ENCODE measurements at regions of chr16 and their contacts with region 1.

Region 1: GRCh38 chr16:1308977-1309885 is at the start of gene UBE2I:
- DNase-seq: peak; percentile 98
- ATAC-seq: peak; percentile 67
- H3K4me3 Mint-ChIP-seq: peak within 1 kb of the TSS; percentile 97
- H3K27ac Mint-ChIP-seq: peak within 1 kb of the TSS; percentile 99
- H3K4me1 Mint-ChIP-seq: peaks cover 47% of the 10 kb centered on the region
- H3K27me3 Mint-ChIP-seq: no peaks in the 10 kb centered on the region
- total RNA-seq, gene UBE2I: 251 to 358 TPM

Region 2: DNA sequence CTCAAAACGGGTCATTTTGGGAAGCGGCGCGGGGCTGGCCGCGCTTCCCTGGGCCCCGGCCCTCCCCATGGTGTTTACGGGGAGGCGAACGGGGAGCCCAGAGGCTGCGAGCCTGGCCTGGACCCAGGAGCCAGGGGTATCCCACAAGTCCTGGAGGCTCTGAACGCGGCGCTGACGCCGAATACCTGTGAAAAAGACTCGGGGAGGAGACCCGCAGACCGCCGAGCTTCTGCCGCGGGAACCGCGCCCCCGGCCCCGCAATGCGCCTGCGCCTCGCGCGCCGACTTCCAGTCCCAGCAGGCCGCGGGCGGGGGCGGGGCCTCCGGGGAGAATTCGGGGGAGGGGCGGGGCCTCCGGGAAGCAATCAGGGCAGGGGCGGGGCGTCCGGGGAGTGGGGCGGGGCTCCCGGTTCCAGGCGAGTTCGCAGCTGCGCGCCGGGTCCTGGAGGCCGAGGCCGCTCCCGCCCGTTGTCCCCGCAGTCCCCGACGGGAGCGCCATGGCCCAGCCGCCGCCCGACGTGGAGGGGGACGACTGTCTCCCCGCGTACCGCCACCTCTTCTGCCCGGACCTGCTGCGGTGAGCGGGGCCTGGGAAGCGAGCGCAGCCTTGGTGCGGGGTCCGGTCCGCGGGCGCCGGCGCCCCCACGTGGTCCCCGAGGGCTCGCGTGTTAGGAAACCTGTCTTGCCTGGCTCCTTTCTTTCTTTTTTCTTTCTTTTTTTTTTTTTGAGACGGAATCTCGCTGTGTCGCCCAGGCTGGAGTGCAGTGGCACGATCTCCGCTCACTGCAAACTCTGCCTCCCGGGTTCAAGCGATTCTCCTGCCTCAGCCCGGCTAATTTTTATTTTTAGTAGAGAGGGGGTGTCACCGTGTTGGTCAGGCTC is 907.5 kb before region 1 on chr16 and contains the start of gene DECR2:
- CTCF ChIA-PET with region 1: no interaction called
- POLR2A ChIA-PET with region 1: no interaction called
- intact Hi-C with region 1: loop called in 1 of 2 experiments (anchors 5 kb)
- DNase-seq: peak; percentile 100
- ATAC-seq: peak; percentile 87
- H3K4me3 Mint-ChIP-seq: peak within 1 kb of the TSS; percentile 82
- H3K27ac Mint-ChIP-seq: peak within 1 kb of the TSS; percentile 87
- H3K4me1 Mint-ChIP-seq: peaks cover 10% of the 10 kb centered on the region
- H3K27me3 Mint-ChIP-seq: no peaks in the 10 kb centered on the region
- total RNA-seq, gene DECR2: 11.5 to 13.0 TPM

Region 3: GRCh38 chr16:684067-684794 is 625.0 kb before region 1 on chr16 and contains the start of gene JMJD8:
- CTCF ChIA-PET with region 1: no interaction called
- POLR2A ChIA-PET with region 1: no interaction called
- intact Hi-C with region 1: loop called in 1 of 2 experiments (anchors 5 kb)
- DNase-seq: peak; percentile 99
- ATAC-seq: peak; percentile 80
- H3K4me3 Mint-ChIP-seq: peak within 1 kb of the TSS; percentile 76
- H3K27ac Mint-ChIP-seq: peak within 1 kb of the TSS; percentile 58
- H3K4me1 Mint-ChIP-seq: peaks cover 40% of the 10 kb centered on the region
- H3K27me3 Mint-ChIP-seq: no peaks in the 10 kb centered on the region
- total RNA-seq, gene JMJD8: 26.1 to 31.4 TPM

Region 4: DNA sequence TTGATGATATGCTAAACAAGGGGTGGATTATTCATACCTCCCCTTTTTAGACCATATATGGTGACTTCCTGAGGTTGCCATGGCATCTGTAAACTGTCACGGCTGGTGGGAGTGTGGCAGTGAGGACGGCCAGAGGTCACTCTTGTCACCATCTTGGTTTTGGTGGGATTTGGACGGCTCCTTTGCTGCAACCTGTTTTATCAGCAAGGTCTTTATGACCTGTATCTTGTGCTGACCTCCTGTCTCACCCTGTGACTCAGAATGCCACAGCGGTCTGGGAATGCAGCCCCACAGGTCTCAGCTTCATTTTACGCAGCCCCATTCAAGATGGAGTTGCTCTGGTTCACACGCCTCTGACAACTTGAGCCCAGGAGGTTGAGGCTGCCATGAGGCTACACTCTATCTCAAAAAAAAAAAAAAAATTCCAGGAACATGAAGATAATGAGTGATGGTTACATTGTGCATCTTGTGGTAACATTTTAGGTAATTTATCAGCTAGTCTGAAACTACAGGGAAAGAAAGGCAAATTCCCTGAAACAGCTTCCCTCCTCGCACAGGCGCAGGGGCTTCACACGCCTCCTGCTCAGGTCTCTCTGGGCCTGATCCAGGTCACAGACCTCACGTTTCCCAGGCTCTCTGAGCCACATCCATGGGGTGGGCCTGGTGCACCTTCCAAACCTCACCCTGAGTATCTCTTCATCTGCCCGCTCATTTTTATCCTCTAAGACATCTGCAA is 15.1 kb before region 1 on chr16:
- CTCF ChIA-PET with region 1: no interaction called
- POLR2A ChIA-PET with region 1: no interaction called
- intact Hi-C with region 1: no loop called
- DNase-seq: no peak
- ATAC-seq: no peak
- H3K4me3 Mint-ChIP-seq: no peak overlapping the region
- H3K27ac Mint-ChIP-seq: no peak overlapping the region
- H3K4me1 Mint-ChIP-seq: peaks cover 5% of the 10 kb centered on the region
- H3K27me3 Mint-ChIP-seq: peaks cover 34% of the 10 kb centered on the region

Region 5: DNA sequence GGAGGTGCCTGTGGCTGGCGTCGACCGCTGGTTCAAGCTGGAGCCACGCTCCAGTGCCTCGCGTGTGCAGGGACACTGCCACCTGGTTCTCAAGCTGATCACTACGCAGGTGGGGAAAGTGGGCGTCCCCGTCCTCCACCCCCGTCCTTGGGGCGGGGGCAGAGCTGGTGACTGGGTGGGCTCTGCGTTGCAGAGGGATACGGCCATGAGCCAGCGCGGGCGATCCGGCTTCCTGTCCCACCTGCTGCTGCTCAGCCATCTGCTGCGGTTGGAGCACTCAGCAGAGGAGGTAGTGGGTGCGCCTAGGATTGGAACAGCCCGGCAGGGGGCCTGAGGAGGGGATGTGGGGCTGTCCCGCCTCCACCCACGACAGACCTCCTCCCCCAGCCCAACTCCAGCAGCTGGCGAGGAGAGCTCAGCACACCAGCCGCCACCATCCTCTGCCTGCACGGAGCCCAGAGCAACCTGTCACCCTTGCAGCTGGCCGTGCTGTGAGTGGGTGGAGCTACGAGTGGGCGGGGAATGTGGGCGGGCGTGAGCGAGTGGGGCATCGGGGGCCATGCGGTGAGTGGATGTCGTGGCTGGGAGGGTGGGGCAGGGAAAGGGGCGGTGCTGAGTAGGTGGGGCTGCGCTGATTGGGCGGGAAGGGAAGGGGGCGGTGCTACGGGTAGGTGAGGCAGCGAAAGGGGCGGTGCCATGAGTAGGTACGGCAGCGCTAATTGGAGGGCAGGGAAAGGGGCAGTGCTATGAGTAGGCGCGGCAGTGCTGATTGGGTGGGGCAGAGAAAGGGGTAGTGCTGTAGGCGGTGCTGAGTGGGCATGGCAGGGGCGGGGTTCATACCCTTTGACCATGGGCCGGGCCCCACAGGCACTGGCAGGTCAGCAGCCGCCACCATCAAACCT is 33.5 kb after region 1 on chr16:
- CTCF ChIA-PET with region 1: no interaction called
- POLR2A ChIA-PET with region 1: no interaction called
- intact Hi-C with region 1: loop called in 1 of 2 experiments (anchors 1 kb)
- DNase-seq: peak; percentile 96
- ATAC-seq: peak; percentile 98
- H3K4me3 Mint-ChIP-seq: peak overlapping the region; percentile 47
- H3K27ac Mint-ChIP-seq: no peak overlapping the region
- H3K4me1 Mint-ChIP-seq: peaks cover 17% of the 10 kb centered on the region
- H3K27me3 Mint-ChIP-seq: no peaks in the 10 kb centered on the region

Region 6: DNA sequence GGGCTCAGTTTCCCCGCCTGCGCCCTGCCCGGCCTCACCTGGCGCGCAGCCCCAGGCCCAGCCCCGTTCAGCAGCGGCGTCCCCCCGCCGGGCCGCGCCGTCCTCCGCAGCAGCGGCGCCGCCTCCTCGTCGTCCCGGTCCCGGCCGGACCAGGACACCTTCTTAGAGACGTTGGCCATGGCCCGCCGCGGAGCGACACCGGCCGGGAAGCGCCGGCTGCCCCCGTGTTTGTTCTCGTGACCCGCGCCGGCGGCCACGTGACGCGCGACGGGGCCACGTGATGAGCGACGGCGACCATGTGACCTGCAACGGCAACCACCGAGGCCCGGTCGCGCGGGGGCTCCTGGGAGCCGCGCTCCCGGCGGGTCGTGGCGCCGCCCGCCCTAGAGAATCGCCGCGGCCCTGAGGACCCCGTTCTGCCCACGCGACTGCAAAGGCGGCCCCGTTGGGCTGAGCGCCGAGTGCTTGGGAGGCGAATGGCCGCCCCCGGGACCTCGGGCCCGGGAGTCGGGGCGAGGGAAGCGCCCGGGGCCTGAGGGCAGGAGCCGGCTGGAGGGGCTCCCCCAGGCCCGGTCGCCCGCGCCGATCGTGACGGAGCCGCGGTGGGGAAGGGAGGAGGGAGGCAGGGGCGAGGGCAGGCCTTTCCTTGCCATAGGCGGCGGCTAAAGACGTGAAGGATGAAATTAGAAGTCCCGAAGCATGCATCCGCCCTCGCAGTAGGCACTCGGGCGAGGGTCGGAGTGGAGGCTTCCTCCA is 165.7 kb after region 1 on chr16 and contains the start of gene CLCN7:
- CTCF ChIA-PET with region 1: no interaction called
- POLR2A ChIA-PET with region 1: no interaction called
- intact Hi-C with region 1: loop called in 1 of 2 experiments (anchors 1 kb)
- DNase-seq: peak; percentile 95
- ATAC-seq: peak; percentile 91
- H3K4me3 Mint-ChIP-seq: peak within 1 kb of the TSS; percentile 73
- H3K27ac Mint-ChIP-seq: peak within 1 kb of the TSS; percentile 81
- H3K4me1 Mint-ChIP-seq: peaks cover 22% of the 10 kb centered on the region
- H3K27me3 Mint-ChIP-seq: no peaks in the 10 kb centered on the region
- total RNA-seq, gene CLCN7: 29.9 to 33.7 TPM

Region 7: DNA sequence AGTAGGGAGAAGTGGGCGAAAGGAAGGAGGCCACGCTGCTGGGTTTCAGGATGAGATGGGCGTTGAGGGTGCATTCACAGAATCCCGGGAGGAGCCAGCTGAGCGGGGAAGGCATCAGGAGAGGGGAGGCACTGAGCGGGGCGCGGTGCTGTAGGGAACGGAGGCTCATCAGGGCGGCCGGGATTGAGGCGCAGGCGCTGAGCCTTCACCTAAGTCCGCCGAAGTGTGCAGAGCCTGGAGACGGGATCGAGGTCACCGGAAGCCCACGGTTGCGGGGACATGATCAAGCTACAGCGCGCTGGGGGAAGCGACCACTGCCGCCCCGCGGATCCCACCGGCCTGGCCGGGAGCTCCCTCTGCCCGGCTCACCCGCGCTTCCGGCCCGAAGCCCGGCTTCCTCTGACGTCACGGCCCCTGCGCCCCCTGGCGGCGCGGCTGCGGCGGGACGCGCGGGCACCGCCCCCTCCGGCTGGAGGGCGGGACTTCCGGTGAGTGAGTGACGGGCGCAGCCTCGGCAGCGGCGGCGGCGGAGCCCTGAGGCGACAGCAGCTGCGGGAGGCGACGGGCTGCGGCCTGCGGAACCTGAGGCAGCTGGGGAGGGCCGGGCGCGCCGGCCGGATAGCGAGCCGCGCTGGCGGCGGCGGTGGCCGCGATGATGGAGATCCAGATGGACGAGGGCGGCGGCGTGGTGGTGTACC is 396.6 kb after region 1 on chr16 and contains the start of gene MAPK8IP3:
- CTCF ChIA-PET with region 1: no interaction called
- POLR2A ChIA-PET with region 1: no interaction called
- intact Hi-C with region 1: loop called in 1 of 2 experiments (anchors 1 kb)
- DNase-seq: peak; percentile 96
- ATAC-seq: peak; percentile 80
- H3K4me3 Mint-ChIP-seq: peak within 1 kb of the TSS; percentile 92
- H3K27ac Mint-ChIP-seq: peak within 1 kb of the TSS; percentile 90
- H3K4me1 Mint-ChIP-seq: peaks cover 32% of the 10 kb centered on the region
- H3K27me3 Mint-ChIP-seq: no peaks in the 10 kb centered on the region
- total RNA-seq, gene MAPK8IP3: 56.7 to 57.6 TPM

Region 8: DNA sequence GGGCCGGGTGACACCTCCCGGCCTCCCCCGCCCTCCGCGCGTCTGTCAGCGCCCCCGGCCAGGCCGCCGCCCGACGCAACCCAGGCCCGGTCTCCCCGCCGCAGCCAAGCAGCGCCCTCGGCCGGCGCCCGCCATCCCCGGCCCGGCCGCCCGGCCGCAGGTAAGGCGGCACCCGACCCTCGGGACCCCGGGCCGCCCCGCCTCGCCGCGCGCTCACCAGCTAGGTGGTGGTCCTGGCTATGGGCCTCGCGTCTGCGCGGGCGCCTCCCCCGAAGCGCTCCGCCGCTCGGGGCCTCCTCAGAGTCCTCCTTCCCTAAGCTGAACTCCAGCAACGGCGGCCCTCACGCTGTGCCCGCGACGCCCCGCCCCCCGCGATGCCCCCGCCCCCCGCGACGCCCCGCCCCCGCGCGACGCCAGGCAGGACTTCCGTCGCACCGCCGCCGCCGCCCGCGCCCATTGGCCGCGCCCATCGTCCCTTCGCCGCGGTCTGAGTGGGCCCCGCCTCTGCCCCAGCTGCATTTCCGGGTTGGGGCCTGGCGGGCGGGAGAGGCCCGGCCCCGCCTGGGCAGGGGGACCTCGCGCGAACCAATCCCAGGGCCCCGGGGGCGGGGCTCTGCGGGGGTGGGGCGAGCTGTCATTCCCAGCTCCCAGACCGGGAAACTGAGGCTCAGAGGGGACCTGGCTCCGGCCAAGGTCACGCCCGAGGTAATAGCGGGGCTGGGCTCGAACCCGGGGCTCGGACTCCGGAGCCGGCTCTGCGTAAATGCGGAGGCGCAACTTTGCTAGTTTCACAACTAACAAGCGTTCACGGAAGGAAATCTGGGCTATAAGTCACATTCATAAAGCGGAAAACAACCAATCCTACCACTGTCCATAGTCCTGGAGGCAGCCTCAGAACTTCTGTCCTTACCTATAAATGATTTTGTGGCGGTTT is 1364.1 kb after region 1 on chr16:
- CTCF ChIA-PET with region 1: no interaction called
- POLR2A ChIA-PET with region 1: no interaction called
- intact Hi-C with region 1: loop called in 1 of 2 experiments (anchors 5 kb)
- DNase-seq: peak; percentile 98
- ATAC-seq: peak; percentile 97
- H3K4me3 Mint-ChIP-seq: peak overlapping the region; percentile 73
- H3K27ac Mint-ChIP-seq: peak overlapping the region; percentile 47
- H3K4me1 Mint-ChIP-seq: peaks cover 28% of the 10 kb centered on the region
- H3K27me3 Mint-ChIP-seq: no peaks in the 10 kb centered on the region

Measured in activated CD4-positive, alpha-beta T cell treated with anti-CD3 and anti-CD28 coated beads for 36 hours (primary cell).